GM10248 (cell line): ENCODE measurements at regions of chr4 and their contacts with region 1.

Region 1: GRCh38 chr4:37826295-37827029 is at the start of gene PGM2:
- DNase-seq: peak; percentile 95
- CTCF ChIP-seq: no peak

Region 2: GRCh38 chr4:37758226-37758625 is 68.2 kb before region 1 on chr4:
- CTCF ChIA-PET with region 1: no interaction called
- POLR2A ChIA-PET with region 1: no interaction called
- DNase-seq: no peak
- CTCF ChIP-seq: no peak

Region 3: DNA sequence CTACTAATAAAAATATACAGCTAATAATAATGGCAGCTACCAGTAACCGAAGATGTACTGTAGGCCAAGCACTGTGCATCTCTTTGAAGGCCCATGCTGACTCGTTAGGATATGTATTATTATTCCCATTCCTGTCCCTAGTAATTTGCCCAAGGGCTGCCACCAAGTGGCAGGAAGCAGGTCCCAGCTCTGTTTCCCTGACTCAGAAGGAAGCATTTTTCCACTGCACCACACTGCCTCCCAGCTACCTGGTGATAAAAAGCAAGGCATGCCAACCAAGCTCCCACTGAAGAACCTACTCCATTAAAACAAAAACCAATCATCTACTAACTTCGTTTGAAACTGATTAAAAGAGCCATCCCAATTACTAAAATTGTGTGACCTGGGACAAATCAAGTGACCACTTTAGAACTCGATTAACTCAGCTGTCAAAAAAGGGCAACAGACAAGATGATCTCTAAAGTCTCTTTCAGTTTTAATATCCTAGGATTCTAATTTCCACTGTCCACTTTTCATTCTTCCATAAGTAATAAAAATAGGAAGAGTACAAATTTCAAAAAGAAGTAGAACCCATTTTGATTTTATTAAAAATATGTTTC is 24.3 kb before region 1 on chr4:
- CTCF ChIA-PET with region 1: interaction called, 12 read pairs
- POLR2A ChIA-PET with region 1: no interaction called
- DNase-seq: no peak
- CTCF ChIP-seq: peak; percentile 19

Region 4: GRCh38 chr4:37836838-37837440 is 10.5 kb after region 1 on chr4:
- CTCF ChIA-PET with region 1: interaction called, 15 read pairs
- POLR2A ChIA-PET with region 1: interaction called, 3 read pairs
- DNase-seq: no peak
- CTCF ChIP-seq: no peak